Activated B cell treated with CpG ODN at 0.5 μM for 24 hours (primary cell): ENCODE measurements at regions of chr16 and their contacts with region 1.

Region 1: GRCh38 chr16:69535123-69536050 is 30.4 kb upstream of the NFAT5 start:
- DNase-seq: no peak
- ATAC-seq: no peak
- H3K4me3 Mint-ChIP-seq: no peak overlapping the region
- H3K27ac Mint-ChIP-seq: no peak overlapping the region
- H3K4me1 Mint-ChIP-seq: peaks cover 26% of the 10 kb centered on the region
- H3K27me3 Mint-ChIP-seq: no peaks in the 10 kb centered on the region
- CTCF ChIP-seq: no peak

Region 2: GRCh38 chr16:69465083-69465721 is 70.2 kb before region 1 on chr16:
- CTCF ChIA-PET with region 1: no interaction called
- POLR2A ChIA-PET with region 1: interaction called, 9 read pairs
- intact Hi-C with region 1: loop called (anchors 1 kb)
- DNase-seq: no peak
- ATAC-seq: no peak
- H3K4me3 Mint-ChIP-seq: peak overlapping the region; percentile 1
- H3K27ac Mint-ChIP-seq: peak overlapping the region; percentile 69
- H3K4me1 Mint-ChIP-seq: peaks cover 36% of the 10 kb centered on the region
- H3K27me3 Mint-ChIP-seq: no peaks in the 10 kb centered on the region
- CTCF ChIP-seq: no peak

Region 3: DNA sequence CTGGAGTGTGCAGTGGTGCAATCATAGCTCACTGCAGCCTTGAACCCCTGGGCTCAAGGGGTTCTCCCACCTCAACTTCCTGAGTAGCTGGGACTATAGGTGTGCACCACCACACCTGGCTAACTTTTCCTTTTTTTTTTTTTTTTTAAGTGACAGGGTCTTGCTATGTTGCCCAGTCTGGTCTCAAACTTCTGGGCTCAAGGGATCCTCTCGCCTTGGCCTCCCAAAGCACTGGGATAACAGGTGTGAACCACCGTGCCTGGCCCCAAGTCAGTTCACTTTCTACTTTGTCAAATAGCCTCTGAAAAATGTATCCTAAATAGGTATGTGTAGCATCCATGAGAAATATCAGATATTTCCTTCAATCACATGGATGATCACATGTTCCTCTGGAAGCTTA is 20.5 kb after region 1 on chr16:
- CTCF ChIA-PET with region 1: no interaction called
- POLR2A ChIA-PET with region 1: interaction called, 15 read pairs
- intact Hi-C with region 1: no loop called
- DNase-seq: no peak
- ATAC-seq: no peak
- H3K4me3 Mint-ChIP-seq: no peak overlapping the region
- H3K27ac Mint-ChIP-seq: no peak overlapping the region
- H3K4me1 Mint-ChIP-seq: peaks cover 4% of the 10 kb centered on the region
- H3K27me3 Mint-ChIP-seq: no peaks in the 10 kb centered on the region
- CTCF ChIP-seq: no peak

Region 4: DNA sequence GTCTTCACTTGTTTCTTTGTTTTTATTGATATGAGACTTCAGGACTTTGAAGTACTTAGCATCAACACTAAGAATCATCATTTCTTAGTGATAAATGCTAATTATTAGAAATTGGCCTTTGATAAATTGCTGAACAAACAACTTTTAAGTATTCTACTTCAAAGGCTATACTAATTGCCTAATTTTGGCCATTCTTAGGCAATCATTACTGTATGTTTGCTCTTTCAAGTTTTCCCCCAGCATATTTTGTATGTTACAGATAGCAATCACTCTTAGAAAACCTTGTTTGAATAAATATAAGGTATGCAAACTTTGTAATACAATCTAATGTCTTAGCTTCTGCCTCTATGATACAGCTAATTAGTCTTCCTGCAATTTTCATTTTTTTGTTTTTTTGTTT is 145.0 kb after region 1 on chr16:
- CTCF ChIA-PET with region 1: no interaction called
- POLR2A ChIA-PET with region 1: no interaction called
- intact Hi-C with region 1: no loop called
- DNase-seq: no peak
- ATAC-seq: no peak
- H3K4me3 Mint-ChIP-seq: no peak overlapping the region
- H3K27ac Mint-ChIP-seq: no peak overlapping the region
- H3K4me1 Mint-ChIP-seq: no peaks in the 10 kb centered on the region
- H3K27me3 Mint-ChIP-seq: no peaks in the 10 kb centered on the region
- CTCF ChIP-seq: no peak